ENCODE measurements at regions of chr10 and their contacts with region 1.

Region 1: DNA sequence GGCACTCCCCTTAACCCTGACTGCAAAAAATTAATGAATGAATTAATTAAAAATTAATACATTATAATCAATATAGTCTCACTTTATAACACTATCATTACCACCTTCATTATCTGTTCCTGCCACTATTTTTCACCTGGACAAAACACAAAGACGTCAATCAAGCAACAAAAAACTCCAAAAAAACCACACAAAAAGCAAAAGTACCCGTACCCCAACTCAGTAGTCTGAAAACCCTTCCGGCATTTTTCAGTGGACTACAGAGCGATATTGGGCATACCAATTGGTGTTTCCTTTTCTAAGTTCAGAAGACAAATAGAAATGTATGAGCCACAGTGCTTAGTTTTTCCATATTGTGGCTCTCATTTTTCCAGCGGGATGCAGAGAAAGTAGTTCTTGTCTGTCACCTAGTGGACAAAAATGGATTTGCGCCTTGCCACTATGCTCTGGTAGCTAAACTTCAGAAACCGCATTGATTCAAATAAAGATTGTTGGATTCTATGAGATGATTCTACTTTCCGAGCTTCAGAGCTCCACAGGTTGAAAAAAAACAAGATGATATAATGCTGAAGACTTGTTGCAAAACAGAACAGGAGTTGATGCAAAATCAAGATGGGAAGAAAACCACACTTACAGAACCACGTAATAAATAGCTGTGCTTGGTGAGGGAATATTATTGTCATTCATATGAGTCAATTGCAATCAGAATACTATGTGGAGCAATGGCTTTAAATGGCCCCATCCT is 50.6 kb upstream of the ITGB1 start:
- DNase-seq: peak; percentile 65 to 79 (median 68)
- H3K4me3 ChIP-seq: peak overlapping the region; percentile 12 to 25
- H3K4me3 Mint-ChIP-seq: peak overlapping the region; percentile 63 to 90 (median 81)
- H3K27ac ChIP-seq: peak overlapping the region; percentile 57
- H3K27ac Mint-ChIP-seq: peak overlapping the region; percentile 92 to 99 (median 93)
- H3K4me1 ChIP-seq: peaks cover 55% of the 10 kb centered on the region
- H3K4me1 Mint-ChIP-seq: peaks cover 39 to 72% (median 54%) of the 10 kb centered on the region in 4 donors
- H3K27me3 ChIP-seq: no peaks in the 10 kb centered on the region
- H3K27me3 Mint-ChIP-seq: no peaks in the 10 kb centered on the region

Region 2: GRCh38 chr10:32445740-32446535 is 562.7 kb before region 1 on chr10 and contains the start of gene CCDC7:
- CTCF ChIA-PET with region 1: interaction called, 9 read pairs
- POLR2A ChIA-PET with region 1: interaction called, 7 read pairs
- intact Hi-C with region 1: loop called (anchors 1 kb)
- DNase-seq: peak; percentile 83 to 90 (median 88)
- H3K4me3 ChIP-seq: peak within 1 kb of the TSS; percentile 89 to 92
- H3K4me3 Mint-ChIP-seq: peak within 1 kb of the TSS; percentile 91 to 99 (median 96)
- H3K27ac ChIP-seq: peak within 1 kb of the TSS; percentile 81
- H3K27ac Mint-ChIP-seq: peak within 1 kb of the TSS; percentile 97 to 100 (median 98)
- H3K4me1 ChIP-seq: peaks cover 20% of the 10 kb centered on the region
- H3K4me1 Mint-ChIP-seq: peaks cover 8 to 26% (median 16%) of the 10 kb centered on the region in 4 donors
- H3K27me3 ChIP-seq: no peaks in the 10 kb centered on the region
- H3K27me3 Mint-ChIP-seq: no peaks in the 10 kb centered on the region
- total RNA-seq, gene CCDC7: 70.3 to 90.5 TPM

Region 3: DNA sequence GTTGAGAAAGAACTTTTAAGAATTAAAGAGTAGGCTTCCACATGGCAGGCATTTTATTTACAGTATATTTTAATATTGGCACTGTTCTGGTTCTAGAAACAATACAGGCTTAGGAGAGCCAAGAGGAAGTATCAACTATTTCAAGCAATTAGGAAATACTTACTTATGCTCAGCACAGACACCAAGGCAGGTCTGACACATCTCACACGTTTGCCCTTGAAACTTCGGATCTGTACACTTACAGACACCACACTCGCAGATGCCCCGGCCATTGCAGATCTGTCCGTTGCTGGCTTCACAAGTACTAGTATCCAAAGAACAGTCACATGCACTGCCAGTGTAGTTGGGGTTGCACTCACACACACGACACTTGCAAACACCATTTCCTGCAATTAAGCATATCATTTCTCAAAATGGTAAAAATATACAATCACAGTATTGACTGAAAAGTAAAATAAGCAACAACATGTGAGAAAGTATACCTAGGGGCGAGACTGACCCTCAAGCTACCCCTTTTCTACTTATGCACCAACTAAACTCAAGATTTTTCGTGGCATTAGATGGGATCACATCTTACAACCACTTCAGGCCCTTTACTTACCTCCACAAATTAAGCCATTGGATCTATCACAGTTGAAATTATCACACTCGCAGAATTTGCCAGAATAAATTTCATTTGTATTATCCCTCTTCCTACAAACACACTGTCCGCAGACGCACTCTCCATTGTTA is 97.2 kb before region 1 on chr10:
- CTCF ChIA-PET with region 1: no interaction called
- POLR2A ChIA-PET with region 1: no interaction called
- intact Hi-C with region 1: no loop called
- DNase-seq: no peak
- H3K4me3 ChIP-seq: no peak overlapping the region
- H3K4me3 Mint-ChIP-seq: no peak overlapping the region
- H3K27ac ChIP-seq: no peak overlapping the region
- H3K27ac Mint-ChIP-seq: peak overlapping the region in 4 of 7 donors; percentile 18 to 72 (median 45)
- H3K4me1 ChIP-seq: no peaks in the 10 kb centered on the region
- H3K4me1 Mint-ChIP-seq: peaks cover 30 to 58% (median 44%) of the 10 kb centered on the region in 4 donors
- H3K27me3 ChIP-seq: no peaks in the 10 kb centered on the region
- H3K27me3 Mint-ChIP-seq: no peaks in the 10 kb centered on the region

Region 4: DNA sequence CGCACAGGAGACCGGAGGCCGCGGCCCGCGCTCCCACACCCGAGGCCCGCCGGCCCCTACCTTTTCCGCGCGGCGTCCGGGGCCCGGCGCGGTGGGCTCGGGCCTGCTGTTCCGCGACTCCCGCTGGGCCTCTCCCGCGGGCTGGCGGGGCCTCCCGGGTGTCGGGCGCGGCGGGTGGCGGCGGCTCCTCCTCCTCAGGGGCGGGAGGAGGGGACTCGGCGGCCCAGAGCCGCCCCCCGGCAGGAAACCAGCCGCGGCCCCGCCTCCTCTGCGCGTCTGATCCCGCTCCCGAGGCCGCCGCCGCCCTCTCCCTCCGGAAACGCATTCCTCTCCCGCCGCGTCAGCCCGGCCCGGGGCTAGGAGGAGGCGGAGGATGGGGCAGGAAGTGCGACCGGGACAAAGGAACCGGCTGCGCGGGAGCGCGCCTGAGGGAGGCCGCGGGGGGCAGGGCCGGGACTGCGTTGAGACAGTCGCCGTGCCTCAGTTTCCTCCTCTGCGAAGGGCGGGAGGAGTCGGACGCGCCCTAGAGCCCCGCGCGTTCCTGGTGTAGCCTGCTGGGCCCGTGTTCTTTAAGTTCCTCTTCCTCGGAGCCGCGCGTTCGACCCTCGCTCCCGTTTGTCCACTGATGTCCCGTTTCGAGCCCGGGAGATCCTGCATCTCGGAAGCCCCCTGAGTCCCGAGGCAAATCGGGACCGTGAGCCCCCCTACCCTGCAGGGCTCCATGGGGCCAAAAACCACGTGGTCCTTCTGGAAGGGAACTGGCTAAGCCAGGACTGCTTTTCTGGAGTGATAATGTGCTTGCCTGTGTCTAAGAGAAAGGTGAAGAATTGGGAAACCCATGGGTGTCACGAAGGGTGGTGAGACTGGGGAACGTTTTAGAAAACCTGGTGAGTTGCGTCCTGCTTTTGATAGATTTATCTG is 50.3 kb before region 1 on chr10 and contains the start of gene ITGB1:
- CTCF ChIA-PET with region 1: interaction called, 14 read pairs
- POLR2A ChIA-PET with region 1: interaction called, 32 read pairs
- intact Hi-C with region 1: loop called (anchors 2 kb)
- DNase-seq: peak; percentile 83 to 85 (median 85)
- H3K4me3 ChIP-seq: peak within 1 kb of the TSS; percentile 76 to 88
- H3K4me3 Mint-ChIP-seq: peak within 1 kb of the TSS; percentile 87 to 96 (median 92)
- H3K27ac ChIP-seq: peak within 1 kb of the TSS; percentile 69
- H3K27ac Mint-ChIP-seq: peak within 1 kb of the TSS; percentile 90 to 96 (median 94)
- H3K4me1 ChIP-seq: peaks cover 35% of the 10 kb centered on the region
- H3K4me1 Mint-ChIP-seq: peaks cover 41 to 61% (median 48%) of the 10 kb centered on the region in 4 donors
- H3K27me3 ChIP-seq: no peaks in the 10 kb centered on the region
- H3K27me3 Mint-ChIP-seq: no peaks in the 10 kb centered on the region
- total RNA-seq, gene ITGB1: 420 to 435 TPM

Region 5: DNA sequence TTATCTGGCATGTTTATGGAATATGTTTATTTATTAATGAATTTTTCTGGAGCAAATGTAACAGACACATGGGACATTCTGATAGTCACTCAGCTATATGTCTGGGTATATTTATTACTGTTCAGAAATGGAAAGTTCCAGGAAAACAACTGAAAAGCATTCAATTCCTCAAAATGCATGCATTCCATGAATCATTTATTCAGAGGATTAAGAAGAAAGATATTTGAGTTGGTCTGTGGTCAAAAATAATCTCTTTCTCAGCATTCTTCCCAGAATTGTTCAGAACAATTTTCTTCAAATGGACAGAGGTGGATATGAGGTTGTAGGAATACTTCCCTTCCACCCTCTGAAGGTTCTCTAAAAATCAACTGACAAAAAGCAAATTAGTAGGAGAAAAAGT is 47.0 kb after region 1 on chr10:
- CTCF ChIA-PET with region 1: interaction called, 5 read pairs
- POLR2A ChIA-PET with region 1: interaction called, 10 read pairs
- intact Hi-C with region 1: no loop called
- DNase-seq: no peak
- H3K4me3 ChIP-seq: no peak overlapping the region
- H3K4me3 Mint-ChIP-seq: no peak overlapping the region
- H3K27ac ChIP-seq: no peak overlapping the region
- H3K27ac Mint-ChIP-seq: peak overlapping the region in 1 of 7 donors; percentile 39
- H3K4me1 ChIP-seq: peaks cover 7% of the 10 kb centered on the region
- H3K4me1 Mint-ChIP-seq: peaks cover 23 to 72% (median 44%) of the 10 kb centered on the region in 4 donors
- H3K27me3 ChIP-seq: no peaks in the 10 kb centered on the region
- H3K27me3 Mint-ChIP-seq: no peaks in the 10 kb centered on the region

Region 6: GRCh38 chr10:33115738-33116719 is 107.4 kb after region 1 on chr10:
- CTCF ChIA-PET with region 1: interaction called, 50 read pairs
- POLR2A ChIA-PET with region 1: interaction called, 162 read pairs
- intact Hi-C with region 1: loop called (anchors 1 kb)
- DNase-seq: peak in 4 of 5 donors; percentile 43 to 66 (median 54)
- H3K4me3 ChIP-seq: peak overlapping the region; percentile 21 to 36
- H3K4me3 Mint-ChIP-seq: peak overlapping the region; percentile 74 to 92 (median 86)
- H3K27ac ChIP-seq: peak overlapping the region; percentile 74
- H3K27ac Mint-ChIP-seq: peak overlapping the region; percentile 91 to 98 (median 96)
- H3K4me1 ChIP-seq: peaks cover 99% of the 10 kb centered on the region
- H3K4me1 Mint-ChIP-seq: peaks cover 77 to 100% (median 86%) of the 10 kb centered on the region in 4 donors
- H3K27me3 ChIP-seq: no peaks in the 10 kb centered on the region
- H3K27me3 Mint-ChIP-seq: no peaks in the 10 kb centered on the region

Region 7: GRCh38 chr10:33155720-33156638 is 147.3 kb after region 1 on chr10:
- CTCF ChIA-PET with region 1: interaction called, 65 read pairs
- POLR2A ChIA-PET with region 1: interaction called, 37 read pairs
- intact Hi-C with region 1: loop called (anchors 1 kb)
- DNase-seq: peak; percentile 59 to 71 (median 67)
- H3K4me3 ChIP-seq: no peak overlapping the region
- H3K4me3 Mint-ChIP-seq: peak overlapping the region in 6 of 8 donors; percentile 3 to 79 (median 50)
- H3K27ac ChIP-seq: no peak overlapping the region
- H3K27ac Mint-ChIP-seq: peak overlapping the region; percentile 21 to 98 (median 84)
- H3K4me1 ChIP-seq: peaks cover 53% of the 10 kb centered on the region
- H3K4me1 Mint-ChIP-seq: peaks cover 35 to 54% (median 48%) of the 10 kb centered on the region in 4 donors
- H3K27me3 ChIP-seq: no peaks in the 10 kb centered on the region
- H3K27me3 Mint-ChIP-seq: no peaks in the 10 kb centered on the region